ENCODE measurements at regions of chr11 and their contacts with region 1.

Region 1: GRCh38 chr11:4626207-4627099 is 10.8 kb upstream of the OR51D1 start:
- DNase-seq: peak; percentile 61
- H3K4me3 ChIP-seq: no peak overlapping the region
- H3K27ac ChIP-seq: no peak overlapping the region
- H3K27me3 ChIP-seq: peaks cover 6% of the 10 kb centered on the region
- CTCF ChIP-seq: peak; percentile 75

Region 2: DNA sequence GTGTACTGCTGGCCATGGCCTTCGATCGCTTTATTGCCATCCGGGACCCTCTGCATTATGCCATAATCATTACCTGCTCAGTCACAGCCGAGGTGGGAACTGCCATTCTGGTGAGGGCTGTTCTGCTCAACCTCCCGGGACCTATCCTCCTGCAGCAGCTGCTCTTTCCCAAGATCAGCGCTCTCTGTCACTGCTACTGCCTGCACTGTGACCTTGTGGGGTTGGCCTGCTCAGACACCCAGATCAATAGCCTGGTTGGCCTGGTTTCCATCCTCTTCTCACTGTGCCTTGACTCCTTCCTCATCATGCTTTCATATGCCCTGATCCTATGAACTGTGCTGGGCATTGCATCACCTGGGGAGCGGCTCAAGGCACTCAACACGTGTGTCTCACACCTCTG is 208.1 kb before region 1 on chr11:
- CTCF ChIA-PET with region 1: no interaction called
- POLR2A ChIA-PET with region 1: no interaction called
- DNase-seq: no peak
- H3K4me3 ChIP-seq: no peak overlapping the region
- H3K27ac ChIP-seq: no peak overlapping the region
- H3K27me3 ChIP-seq: no peaks in the 10 kb centered on the region
- CTCF ChIP-seq: no peak

Region 3: DNA sequence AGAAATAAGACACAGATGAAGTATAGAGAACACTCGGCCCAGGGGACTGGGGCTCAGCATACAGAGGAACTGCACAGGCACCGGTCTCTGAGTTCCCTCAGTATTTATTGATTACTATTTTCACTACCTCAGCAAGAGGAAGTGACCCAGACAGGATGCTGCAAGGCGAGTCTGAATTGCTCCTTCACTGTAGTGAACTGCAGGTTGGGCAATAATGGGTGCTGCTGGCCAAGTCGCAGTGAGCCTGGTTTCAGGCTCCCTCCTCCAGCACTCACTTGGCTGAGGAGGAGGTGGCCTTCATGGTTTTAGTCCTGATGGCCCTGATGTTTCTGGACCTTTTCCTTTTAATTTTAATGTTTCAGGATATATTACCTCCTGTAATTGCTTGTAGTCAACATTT is 167.0 kb before region 1 on chr11:
- CTCF ChIA-PET with region 1: no interaction called
- POLR2A ChIA-PET with region 1: no interaction called
- DNase-seq: no peak
- H3K4me3 ChIP-seq: no peak overlapping the region
- H3K27ac ChIP-seq: no peak overlapping the region
- H3K27me3 ChIP-seq: no peaks in the 10 kb centered on the region
- CTCF ChIP-seq: no peak

Region 4: GRCh38 chr11:4607781-4608666 is 18.4 kb before region 1 on chr11 and contains the start of gene TRIM68:
- CTCF ChIA-PET with region 1: interaction called, 24 read pairs
- POLR2A ChIA-PET with region 1: no interaction called
- DNase-seq: peak; percentile 89
- H3K4me3 ChIP-seq: peak within 1 kb of the TSS; percentile 82
- H3K27ac ChIP-seq: peak within 1 kb of the TSS; percentile 94
- H3K27me3 ChIP-seq: no peaks in the 10 kb centered on the region
- CTCF ChIP-seq: no peak
- polyA plus RNA-seq, gene TRIM68: 6.4 and 6.9 TPM in 2 replicates

Region 5: GRCh38 chr11:4615856-4616444 is 10.5 kb before region 1 on chr11:
- CTCF ChIA-PET with region 1: interaction called, 11 read pairs
- POLR2A ChIA-PET with region 1: no interaction called
- DNase-seq: no peak
- H3K4me3 ChIP-seq: no peak overlapping the region
- H3K27ac ChIP-seq: no peak overlapping the region
- H3K27me3 ChIP-seq: no peaks in the 10 kb centered on the region
- CTCF ChIP-seq: no peak

Region 6: GRCh38 chr11:4748438-4748837 is 122.0 kb after region 1 on chr11:
- CTCF ChIA-PET with region 1: no interaction called
- POLR2A ChIA-PET with region 1: no interaction called
- DNase-seq: no peak
- H3K4me3 ChIP-seq: no peak overlapping the region
- H3K27ac ChIP-seq: no peak overlapping the region
- H3K27me3 ChIP-seq: no peaks in the 10 kb centered on the region
- CTCF ChIP-seq: no peak

Region 7: GRCh38 chr11:4826425-4826824 is 200.0 kb after region 1 on chr11:
- CTCF ChIA-PET with region 1: interaction called, 36 read pairs
- POLR2A ChIA-PET with region 1: no interaction called
- DNase-seq: no peak
- H3K4me3 ChIP-seq: no peak overlapping the region
- H3K27ac ChIP-seq: no peak overlapping the region
- H3K27me3 ChIP-seq: no peaks in the 10 kb centered on the region
- CTCF ChIP-seq: peak; percentile 66

Region 8: GRCh38 chr11:5004424-5005274 is 378.2 kb after region 1 on chr11:
- CTCF ChIA-PET with region 1: interaction called, 30 read pairs
- POLR2A ChIA-PET with region 1: no interaction called
- DNase-seq: peak; percentile 27
- H3K4me3 ChIP-seq: no peak overlapping the region
- H3K27ac ChIP-seq: no peak overlapping the region
- H3K27me3 ChIP-seq: no peaks in the 10 kb centered on the region
- CTCF ChIP-seq: peak; percentile 77

Region 9: GRCh38 chr11:5891216-5891800 is 1264.9 kb after region 1 on chr11:
- CTCF ChIA-PET with region 1: interaction called, 10 read pairs
- POLR2A ChIA-PET with region 1: no interaction called
- DNase-seq: no peak
- H3K4me3 ChIP-seq: no peak overlapping the region
- H3K27ac ChIP-seq: no peak overlapping the region
- H3K27me3 ChIP-seq: no peaks in the 10 kb centered on the region
- CTCF ChIP-seq: peak; percentile 52